ENCODE measurements at regions of chr19 and their contacts with region 1.

Region 1: GRCh38 chr19:17135001-17135853 is 59.6 kb downstream of the MYO9B start:
- DNase-seq: peak; percentile 58 to 80 (median 70)
- H3K4me3 ChIP-seq: peak overlapping the region in 56 of 59 donors; percentile 0 to 59 (median 36)
- H3K27ac ChIP-seq: peak overlapping the region; percentile 5 to 92 (median 83)
- H3K27me3 ChIP-seq: no peaks in the 10 kb centered on the region
- CTCF ChIP-seq: peak in 34 of 56 donors; percentile 11 to 53 (median 30)

Region 2: DNA sequence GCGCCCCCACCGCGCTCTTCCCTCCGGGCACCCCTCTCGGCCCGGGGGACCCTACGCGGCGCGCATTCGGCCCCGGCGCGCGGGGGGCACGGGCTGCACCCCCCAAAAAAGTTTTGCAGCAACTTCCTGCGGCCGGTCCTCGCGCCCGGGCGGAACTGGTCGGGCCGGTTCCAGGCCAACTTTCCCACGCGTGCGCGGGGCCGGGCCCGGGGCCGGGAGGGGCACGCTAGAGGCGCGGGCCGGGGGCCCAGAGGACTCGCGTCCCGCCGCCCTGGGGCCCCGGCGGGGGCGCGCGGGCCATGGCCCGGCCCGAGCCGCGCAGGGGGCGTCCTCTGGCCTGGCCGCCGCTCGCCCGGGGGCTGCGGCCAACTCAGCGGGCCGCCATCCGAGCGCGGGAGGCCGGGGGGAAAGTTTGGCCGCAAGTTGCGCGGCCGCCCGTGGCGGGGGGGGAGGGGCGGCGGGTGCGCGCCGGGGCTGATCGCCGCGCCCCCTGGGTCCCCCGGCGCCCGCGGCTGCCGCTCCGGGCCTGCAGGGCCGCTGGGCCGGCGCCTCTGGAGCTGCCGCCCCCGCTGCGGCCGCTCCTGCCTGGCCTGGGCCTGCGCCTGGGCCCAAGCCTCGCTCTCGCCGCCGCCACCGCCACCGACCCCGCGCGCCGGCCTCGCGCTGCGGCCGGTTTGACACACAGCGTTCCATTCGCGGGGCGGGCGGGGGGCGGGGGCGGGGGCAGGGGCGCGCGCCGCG is 110.2 kb after region 1 on chr19 and contains the start of gene NR2F6:
- intact Hi-C with region 1: loop called in 1 of 2 experiments (anchors 5 kb)
- DNase-seq: peak in 1 of 10 donors; percentile 56
- H3K4me3 ChIP-seq: peak within 1 kb of the TSS; percentile 54 to 82 (median 71)
- H3K27ac ChIP-seq: peak within 1 kb of the TSS in 56 of 59 donors; percentile 22 to 91 (median 78)
- H3K27me3 ChIP-seq: no peaks in the 10 kb centered on the region
- CTCF ChIP-seq: no peak
- total RNA-seq, gene NR2F6: 15.4 to 52.5 (median 27.8) TPM

Measured in dorsolateral prefrontal cortex (tissue), 120 donors.